Cardiac septum (tissue), 1 donor: ENCODE measurements at regions of chr11 and their contacts with region 1.

Region 1: GRCh38 chr11:30046582-30046952 is 29.7 kb upstream of the KCNA4 start:
- DNase-seq: no peak

Region 2: DNA sequence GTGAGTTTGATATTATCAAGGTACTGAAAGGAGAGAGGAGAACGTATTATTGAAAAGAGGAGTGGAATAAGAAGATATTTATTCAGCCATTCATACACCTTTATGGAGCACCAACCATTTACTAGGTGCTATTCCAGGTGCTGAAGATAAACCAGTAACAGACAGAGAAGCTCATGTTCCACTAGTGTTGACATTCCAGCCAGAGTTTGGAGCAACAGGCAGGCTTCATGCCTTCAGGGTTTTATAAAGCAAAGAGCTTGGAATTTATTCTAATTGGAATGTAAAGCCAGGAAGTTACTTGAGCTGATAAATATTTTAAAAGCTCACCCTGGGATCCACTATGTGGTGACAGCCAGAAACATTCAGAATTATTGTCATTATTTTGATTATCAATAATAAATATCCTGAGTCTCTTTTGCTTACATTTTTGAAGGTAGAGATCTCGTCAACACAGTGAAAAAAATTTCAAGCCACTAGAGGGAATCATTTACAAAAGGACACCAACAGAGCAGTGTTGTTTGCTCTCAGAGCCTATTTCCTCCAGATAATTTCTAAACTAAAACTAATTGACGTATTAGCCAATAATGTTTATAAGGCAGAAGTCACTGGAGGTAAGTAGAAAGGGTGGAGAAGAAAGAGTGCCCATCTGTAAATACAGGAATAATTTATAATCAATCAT is 201.7 kb before region 1 on chr11:
- intact Hi-C with region 1: loop called (anchors 10 kb)
- DNase-seq: no peak